Mucosa of descending colon (tissue), 3 donors: ENCODE measurements at regions of chr3 and their contacts with region 1.

Region 1: DNA sequence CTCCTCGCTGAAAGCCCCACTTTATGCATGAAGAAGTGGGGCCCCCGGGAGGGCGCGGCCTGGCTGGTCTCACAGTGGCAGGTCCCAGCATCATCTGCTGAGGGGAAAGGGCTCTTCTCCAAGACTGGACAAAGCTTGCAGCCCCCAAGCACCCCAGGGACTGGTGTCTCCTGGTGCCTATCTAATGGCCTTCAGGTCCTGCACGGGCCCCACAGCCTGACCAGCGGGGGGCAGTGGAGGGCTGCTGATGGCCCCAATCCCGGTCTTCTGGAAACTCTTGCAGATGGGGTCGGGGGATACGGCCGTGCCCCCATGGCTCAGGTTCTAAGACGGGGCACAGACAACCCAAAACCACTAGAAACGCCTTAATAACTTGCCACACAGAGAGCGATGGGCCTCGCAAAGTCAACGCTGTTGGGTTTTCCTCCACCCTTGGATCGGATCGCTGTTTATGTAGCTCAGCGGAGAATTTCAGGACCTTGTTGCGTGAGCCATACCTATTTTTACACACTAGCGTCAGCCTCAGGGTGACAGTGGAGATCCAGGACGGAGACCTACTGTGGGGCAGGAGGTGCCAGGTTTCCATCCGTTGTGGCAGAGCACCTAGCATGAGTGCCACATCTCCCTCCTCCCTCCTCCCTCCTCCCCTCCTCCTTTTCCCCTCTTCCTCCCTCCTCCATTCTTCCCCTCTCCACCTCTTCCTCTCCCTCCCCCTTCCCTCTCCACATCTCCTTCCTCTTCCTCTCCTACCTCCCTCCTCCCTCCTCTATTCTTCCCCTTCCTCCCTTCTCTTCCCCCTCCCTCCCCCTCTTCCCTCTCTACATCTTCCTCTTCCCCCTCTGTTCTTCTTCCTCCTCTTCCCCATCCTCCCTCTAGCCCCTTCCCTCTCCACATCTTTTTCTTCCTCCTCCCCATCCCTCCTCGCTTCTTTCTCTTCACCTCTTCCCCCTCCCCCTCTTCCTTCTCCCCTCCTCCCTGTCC is 79.3 kb upstream of the ALDH1L1 start:
- DNase-seq: peak in 2 of 3 donors; percentile 48 to 60
- ATAC-seq: no peak
- H3K4me3 ChIP-seq: no peak overlapping the region
- H3K4me1 ChIP-seq: no peaks in the 10 kb centered on the region
- CTCF ChIP-seq: no peak

Region 2: DNA sequence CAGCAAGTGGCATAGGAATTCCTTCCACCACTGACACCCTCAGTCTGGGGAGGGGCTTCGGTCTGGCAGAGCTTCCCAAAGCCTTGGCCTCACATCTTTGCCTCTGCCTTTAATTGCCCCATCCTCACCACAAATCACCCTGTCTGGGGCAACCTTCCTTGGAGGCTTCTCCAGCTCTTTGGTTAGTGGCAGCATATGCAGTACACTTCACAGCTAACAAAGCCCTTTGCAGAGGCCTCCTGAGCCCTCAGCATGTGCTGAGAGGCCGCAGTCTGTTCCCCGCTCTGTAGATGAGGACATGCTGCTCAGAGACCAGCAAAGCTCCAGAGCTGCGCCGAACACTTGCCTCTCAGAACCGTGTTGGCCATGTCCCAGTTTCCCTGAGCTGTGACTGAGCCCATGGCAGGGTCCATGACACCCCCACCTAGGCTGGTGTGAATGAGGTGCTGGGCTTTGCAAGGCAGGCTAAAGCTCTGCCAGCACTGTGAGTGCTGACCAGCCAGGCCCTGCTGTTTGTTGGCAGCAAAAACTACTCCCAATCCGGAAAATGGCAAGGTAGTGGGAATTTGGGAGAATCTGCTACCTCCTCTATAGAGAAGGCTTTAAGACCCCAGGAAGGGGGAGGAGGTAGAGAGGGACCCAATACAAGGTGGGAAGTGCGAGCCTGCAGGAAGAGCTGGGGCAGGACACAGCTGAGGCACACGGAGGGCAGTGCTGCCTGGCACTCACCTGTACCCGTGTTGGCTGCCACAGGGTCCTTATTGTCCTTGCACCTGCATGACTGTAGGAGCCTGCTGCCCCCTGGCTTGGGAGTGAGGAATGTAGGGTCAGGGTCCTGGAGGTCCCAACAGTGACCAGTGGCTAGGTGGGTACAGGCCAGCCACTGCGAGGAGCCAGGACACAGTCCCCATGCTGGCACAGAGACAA is 105.9 kb after region 1 on chr3:
- intact Hi-C with region 1: no loop called
- DNase-seq: peak in 1 of 3 donors; percentile 39
- ATAC-seq: no peak
- H3K4me3 ChIP-seq: no peak overlapping the region
- H3K4me1 ChIP-seq: no peaks in the 10 kb centered on the region
- CTCF ChIP-seq: no peak

Region 3: DNA sequence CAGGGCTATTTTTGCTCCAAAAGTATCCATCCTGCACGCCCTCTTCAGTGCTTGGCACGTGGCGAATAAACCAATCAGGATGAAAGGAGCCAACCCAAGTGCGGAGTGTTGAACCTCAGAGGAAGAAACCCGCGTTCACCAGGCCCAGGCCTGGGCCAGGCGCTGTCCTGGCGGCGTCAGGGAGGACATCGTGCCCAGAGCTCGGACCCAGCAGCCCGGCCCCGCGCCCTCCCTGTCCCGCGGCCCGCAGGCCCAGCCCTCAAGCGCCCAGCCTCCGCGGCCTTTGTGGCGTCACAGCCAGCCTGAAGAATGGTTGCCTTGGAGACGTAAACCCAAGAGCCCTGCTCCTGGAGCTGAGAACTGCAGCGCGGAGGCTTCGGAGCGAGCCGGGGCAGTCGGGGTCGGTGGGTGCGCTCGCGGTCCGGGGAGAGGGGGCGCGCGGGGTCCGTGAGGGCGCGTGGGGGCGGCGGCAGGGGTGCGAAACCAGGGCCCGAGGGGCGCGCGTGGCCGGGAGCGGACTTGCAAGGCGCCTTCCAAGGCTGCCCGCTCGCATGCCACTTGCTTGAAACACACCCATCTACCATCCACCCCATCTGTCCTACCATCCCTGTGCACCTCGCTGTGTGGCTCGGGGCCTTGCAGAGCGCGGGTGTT is 135.0 kb after region 1 on chr3 and contains the start of gene CFAP100:
- intact Hi-C with region 1: loop called (anchors 5 to 10 kb)
- DNase-seq: peak in 1 of 3 donors; percentile 17
- ATAC-seq: peak; percentile 27
- H3K4me3 ChIP-seq: no peak within 1 kb of the TSS
- H3K4me1 ChIP-seq: no peaks in the 10 kb centered on the region
- CTCF ChIP-seq: no peak
- total RNA-seq, gene CFAP100: not detected